ENCODE measurements at regions of chr6 and their contacts with region 1.

Region 1: GRCh38 chr6:2309122-2309521 is 63.7 kb upstream of the GMDS start:
- DNase-seq: no peak
- H3K4me3 ChIP-seq: no peak overlapping the region
- H3K27ac ChIP-seq: no peak overlapping the region
- H3K4me1 ChIP-seq: no peaks in the 10 kb centered on the region
- CTCF ChIP-seq: no peak

Region 2: DNA sequence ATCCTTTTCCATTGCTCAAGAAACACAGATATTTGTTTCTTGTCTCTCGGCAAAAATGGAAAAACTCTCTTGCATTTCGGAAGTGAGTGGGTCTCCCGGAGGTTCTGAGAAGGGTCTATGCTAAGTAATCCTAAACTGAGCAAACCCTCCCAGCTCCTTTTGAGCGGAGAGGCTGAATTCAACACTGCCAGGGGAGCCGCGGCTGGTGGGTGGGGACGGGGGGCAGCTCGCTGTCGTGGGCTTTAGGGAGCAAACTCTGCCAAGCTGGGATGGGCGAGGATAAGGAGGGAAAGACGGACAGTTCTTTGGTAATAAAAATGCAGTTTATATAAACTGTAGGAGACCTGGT is 488.0 kb before region 1 on chr6:
- CTCF ChIA-PET with region 1: interaction called, 15 read pairs
- POLR2A ChIA-PET with region 1: no interaction called
- intact Hi-C with region 1: no loop called
- DNase-seq: no peak
- H3K4me3 ChIP-seq: no peak overlapping the region
- H3K27ac ChIP-seq: no peak overlapping the region
- H3K4me1 ChIP-seq: peaks cover 11% of the 10 kb centered on the region
- CTCF ChIP-seq: no peak

Region 3: DNA sequence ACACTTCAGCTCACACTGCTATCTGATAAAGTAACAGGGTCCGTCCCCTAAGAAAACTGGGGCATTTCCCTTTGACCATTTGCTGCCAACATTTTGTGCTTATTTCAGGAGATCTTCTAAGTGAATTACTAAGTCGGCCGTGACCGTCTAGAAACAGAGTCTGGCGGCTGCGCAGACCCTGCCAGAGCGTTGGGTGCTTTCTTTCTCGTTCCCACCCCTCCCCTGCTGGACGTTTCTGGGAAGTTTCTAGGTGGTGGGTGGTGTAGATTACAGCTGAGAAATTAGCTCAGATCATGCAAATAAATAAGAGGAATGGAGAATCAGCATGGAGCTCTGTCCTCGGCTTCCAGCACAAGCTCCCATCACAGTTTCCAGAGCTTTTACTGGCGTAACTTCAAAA is 313.5 kb after region 1 on chr6:
- CTCF ChIA-PET with region 1: no interaction called
- POLR2A ChIA-PET with region 1: no interaction called
- intact Hi-C with region 1: no loop called
- DNase-seq: no peak
- H3K4me3 ChIP-seq: no peak overlapping the region
- H3K27ac ChIP-seq: no peak overlapping the region
- H3K4me1 ChIP-seq: no peaks in the 10 kb centered on the region
- CTCF ChIP-seq: no peak

Measured in OCI-LY7 (cell line).